Panc1 (cell line): ENCODE measurements at regions of chr6 and their contacts with region 1.

Region 1: GRCh38 chr6:84681693-84682326 is 82.6 kb downstream of the TBX18 start:
- DNase-seq: no peak
- ATAC-seq: no peak
- H3K4me3 ChIP-seq: no peak overlapping the region
- H3K27ac ChIP-seq: no peak overlapping the region
- H3K4me1 ChIP-seq: no peaks in the 10 kb centered on the region
- H3K27me3 ChIP-seq: no peaks in the 10 kb centered on the region
- CTCF ChIP-seq: no peak

Region 2: DNA sequence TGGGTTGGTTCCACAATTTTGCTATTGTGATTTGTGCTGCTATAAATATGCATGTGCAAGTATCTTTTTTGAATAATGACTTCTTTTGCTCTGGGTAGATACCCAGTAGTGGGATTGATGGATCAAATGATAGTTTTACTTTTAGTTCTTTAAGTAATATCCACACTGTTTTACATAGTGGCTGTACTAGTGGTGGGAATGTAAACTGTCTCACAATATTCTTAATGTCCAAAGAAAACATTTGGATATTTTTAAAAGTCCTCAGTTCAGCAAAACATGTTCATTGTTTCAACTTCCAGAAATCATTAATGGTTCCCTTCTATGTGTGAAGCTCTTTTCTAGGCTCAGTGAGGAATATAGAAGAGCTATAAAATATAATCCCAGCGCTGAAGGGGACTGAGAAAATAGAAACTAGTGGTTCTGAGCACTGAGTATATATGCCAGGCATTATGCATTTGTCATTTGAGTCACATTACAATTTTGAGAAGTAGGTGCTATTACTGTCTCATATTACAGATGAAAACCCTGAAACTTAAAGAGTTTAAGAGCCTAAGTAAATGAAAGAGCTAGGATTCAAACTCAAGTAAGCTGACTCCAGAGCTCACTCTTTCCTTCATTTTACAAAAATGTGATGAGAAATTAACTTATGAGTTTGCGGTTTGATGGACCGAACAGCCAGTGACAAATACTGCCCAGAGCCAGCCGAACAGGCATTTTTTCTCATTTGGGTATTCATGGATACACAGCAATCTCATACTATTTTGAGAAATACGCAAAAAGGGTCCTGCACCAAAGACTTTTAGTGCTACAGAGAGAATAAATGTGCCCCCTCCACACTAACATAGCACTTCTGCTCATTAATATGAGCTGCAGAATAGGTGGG is 167.5 kb before region 1 on chr6:
- CTCF ChIA-PET with region 1: no interaction called
- POLR2A ChIA-PET with region 1: interaction called, 15 read pairs
- in situ Hi-C with region 1: no loop called
- intact Hi-C with region 1: no loop called
- DNase-seq: no peak
- ATAC-seq: no peak
- H3K4me3 ChIP-seq: no peak overlapping the region
- H3K27ac ChIP-seq: no peak overlapping the region
- H3K4me1 ChIP-seq: no peaks in the 10 kb centered on the region
- H3K27me3 ChIP-seq: no peaks in the 10 kb centered on the region
- CTCF ChIP-seq: no peak

Region 3: DNA sequence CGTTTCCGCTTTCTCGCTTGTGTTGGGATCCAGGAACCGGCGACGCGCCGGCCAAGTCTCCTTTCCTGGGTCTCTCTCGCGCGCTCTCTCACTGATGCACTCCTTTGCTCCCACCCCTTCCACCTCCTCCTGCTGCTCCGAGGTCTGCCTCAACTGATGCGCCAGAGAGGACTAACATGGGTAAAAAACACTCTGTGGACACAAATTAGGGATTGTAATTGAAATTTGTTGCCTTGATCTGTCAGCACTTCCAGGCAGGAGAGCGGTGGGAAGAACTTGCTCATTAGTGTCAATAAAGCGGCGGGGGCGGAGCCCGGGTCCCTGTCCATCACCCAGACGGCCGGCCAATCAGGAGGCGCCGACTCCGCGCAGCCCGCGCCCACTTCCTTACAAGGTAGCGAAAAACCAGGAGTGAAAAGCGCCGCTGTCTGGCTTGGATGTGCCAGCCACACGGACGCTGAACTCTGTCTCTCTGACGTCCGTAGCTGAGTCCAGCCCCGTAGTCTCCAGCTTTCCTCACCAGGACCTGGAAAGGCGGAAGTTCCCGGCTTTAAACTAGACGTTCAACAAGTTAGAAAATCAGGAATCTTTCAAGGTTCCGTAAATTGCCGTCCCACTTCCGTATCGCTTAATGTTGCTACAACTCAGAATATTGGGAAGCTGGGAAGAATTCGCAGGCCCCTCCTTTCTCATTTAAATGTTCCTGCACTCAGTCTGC is 82.7 kb after region 1 on chr6 and contains the start of gene TBX18:
- CTCF ChIA-PET with region 1: no interaction called
- POLR2A ChIA-PET with region 1: no interaction called
- in situ Hi-C with region 1: no loop called
- intact Hi-C with region 1: no loop called
- DNase-seq: peak; percentile 27
- ATAC-seq: peak; percentile 89
- H3K4me3 ChIP-seq: peak within 1 kb of the TSS; percentile 55 to 67
- H3K27ac ChIP-seq: peak within 1 kb of the TSS; percentile 72
- H3K4me1 ChIP-seq: peaks cover 6% of the 10 kb centered on the region; the same call in 1 of the 2 replicates
- H3K27me3 ChIP-seq: peaks cover 2% of the 10 kb centered on the region; the same call in 1 of the 2 replicates
- CTCF ChIP-seq: no peak
- total RNA-seq, gene TBX18: 10.1 TPM

Region 4: GRCh38 chr6:84943905-84944304 is 262.1 kb after region 1 on chr6:
- CTCF ChIA-PET with region 1: no interaction called
- POLR2A ChIA-PET with region 1: no interaction called
- in situ Hi-C with region 1: no loop called
- intact Hi-C with region 1: no loop called
- DNase-seq: no peak
- ATAC-seq: no peak
- H3K4me3 ChIP-seq: no peak overlapping the region
- H3K27ac ChIP-seq: no peak overlapping the region
- H3K4me1 ChIP-seq: no peaks in the 10 kb centered on the region
- H3K27me3 ChIP-seq: no peaks in the 10 kb centered on the region
- CTCF ChIP-seq: no peak